CD8-positive, alpha-beta T cell (primary cell): ENCODE measurements at regions of chr1 and their contacts with region 1.

Region 1: DNA sequence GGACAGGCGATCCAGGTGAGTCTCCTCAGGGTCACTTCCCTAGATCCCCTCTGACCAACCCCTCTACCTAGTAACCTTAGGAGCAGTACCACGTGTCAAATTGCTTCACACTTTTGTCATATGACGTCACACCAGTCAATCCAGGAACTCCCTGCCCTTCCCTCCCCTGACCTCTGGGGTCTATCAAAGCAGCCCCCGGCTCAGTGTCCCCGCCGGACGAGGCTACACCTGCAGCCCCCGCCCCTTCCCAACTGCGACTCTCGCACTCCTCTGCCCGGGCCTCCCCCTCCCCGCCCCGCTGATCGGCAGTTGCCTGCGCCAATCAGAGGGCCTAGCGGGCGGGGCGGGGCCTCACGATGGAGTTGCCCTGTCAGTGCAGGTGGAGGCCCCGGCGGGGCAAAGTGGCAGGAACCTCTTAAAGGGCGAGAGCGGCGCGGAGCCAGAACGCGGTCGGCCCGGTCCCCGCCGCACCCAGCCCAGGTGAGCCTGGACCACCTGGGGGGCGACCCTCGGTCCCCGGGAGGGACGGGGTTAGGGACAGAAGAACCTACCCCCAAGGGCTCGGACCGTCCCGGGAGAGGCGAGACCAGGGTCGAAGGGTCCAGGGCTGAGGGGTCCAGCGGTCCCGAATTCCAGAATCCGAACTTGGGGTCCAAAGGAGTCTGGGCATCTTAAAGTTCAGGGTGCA is 27.5 kb upstream of the EPB41 start:
- DNase-seq: peak; percentile 80 to 94 (median 87)
- ATAC-seq: peak; percentile 71
- H3K4me3 ChIP-seq: peak overlapping the region; percentile 93 to 94
- H3K4me3 Mint-ChIP-seq: peak overlapping the region; percentile 87
- H3K27ac ChIP-seq: peak overlapping the region; percentile 67 to 88
- H3K27ac Mint-ChIP-seq: peak overlapping the region; percentile 96
- H3K4me1 ChIP-seq: peaks cover 41% of the 10 kb centered on the region
- H3K4me1 Mint-ChIP-seq: peaks cover 59% of the 10 kb centered on the region
- H3K27me3 ChIP-seq: no peaks in the 10 kb centered on the region
- H3K27me3 Mint-ChIP-seq: no peaks in the 10 kb centered on the region
- CTCF ChIP-seq: no peak

Region 2: DNA sequence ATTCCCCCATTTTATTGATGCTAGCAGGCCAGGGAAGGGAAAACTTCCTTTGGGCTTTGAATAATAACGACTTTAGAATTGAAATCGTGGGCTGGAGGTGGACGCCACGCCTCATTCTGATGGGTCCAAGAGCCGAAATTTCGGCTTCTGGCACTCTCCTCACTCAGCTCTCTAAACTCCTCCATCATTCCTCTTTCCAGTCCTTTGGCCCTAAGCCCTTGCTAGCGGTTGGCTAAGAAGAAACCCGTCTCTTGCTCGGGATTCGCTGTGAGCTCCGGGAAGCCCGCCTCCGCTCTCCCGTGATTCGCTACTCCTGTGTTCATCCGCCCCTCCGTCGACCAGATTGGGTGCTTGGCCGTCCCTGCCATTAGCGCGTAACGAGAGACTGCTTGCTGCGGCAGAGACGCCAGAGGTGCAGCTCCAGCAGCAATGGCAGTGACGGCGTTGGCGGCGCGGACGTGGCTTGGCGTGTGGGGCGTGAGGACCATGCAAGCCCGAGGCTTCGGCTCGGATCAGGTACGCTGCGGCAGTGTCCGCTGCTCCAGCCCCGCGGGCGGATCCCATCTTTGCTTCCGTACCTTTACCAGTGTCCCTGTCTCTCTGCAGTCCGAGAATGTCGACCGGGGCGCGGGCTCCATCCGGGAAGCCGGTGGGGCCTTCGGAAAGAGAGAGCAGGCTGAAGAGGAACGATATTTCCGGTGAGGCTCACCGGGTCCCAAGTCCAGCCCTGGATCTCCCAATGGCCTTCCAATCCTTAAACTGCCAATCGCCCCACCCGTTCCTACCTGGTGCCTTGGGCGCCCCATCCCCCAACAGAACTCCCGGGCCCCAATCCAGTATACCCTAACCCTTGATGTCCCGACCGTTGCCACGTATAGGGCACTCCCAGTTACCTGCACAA is 650.9 kb before region 1 on chr1 and contains the start of gene ATP5IF1:
- CTCF ChIA-PET with region 1: no interaction called
- POLR2A ChIA-PET with region 1: no interaction called
- intact Hi-C with region 1: loop called in 1 of 2 experiments (anchors 5 kb)
- DNase-seq: peak; percentile 90 to 98 (median 94)
- ATAC-seq: peak; percentile 95
- H3K4me3 ChIP-seq: peak within 1 kb of the TSS; percentile 80 to 96
- H3K4me3 Mint-ChIP-seq: no peak within 1 kb of the TSS
- H3K27ac ChIP-seq: peak within 1 kb of the TSS; percentile 84 to 96
- H3K27ac Mint-ChIP-seq: no peak within 1 kb of the TSS
- H3K4me1 ChIP-seq: peaks cover 41% of the 10 kb centered on the region
- H3K4me1 Mint-ChIP-seq: peaks cover 21% of the 10 kb centered on the region
- H3K27me3 ChIP-seq: no peaks in the 10 kb centered on the region
- H3K27me3 Mint-ChIP-seq: no peaks in the 10 kb centered on the region
- CTCF ChIP-seq: no peak
- total RNA-seq, gene ATP5IF1: 66.1 to 69.3 TPM

Region 3: GRCh38 chr1:28552758-28553663 is 333.9 kb before region 1 on chr1 and contains the start of gene TRNAU1AP:
- CTCF ChIA-PET with region 1: no interaction called
- POLR2A ChIA-PET with region 1: no interaction called
- intact Hi-C with region 1: loop called in 1 of 2 experiments (anchors 2 kb)
- DNase-seq: peak; percentile 95 to 98 (median 97)
- ATAC-seq: peak; percentile 96
- H3K4me3 ChIP-seq: peak within 1 kb of the TSS; percentile 91 to 98
- H3K4me3 Mint-ChIP-seq: peak within 1 kb of the TSS; percentile 99
- H3K27ac ChIP-seq: peak within 1 kb of the TSS; percentile 77 to 86
- H3K27ac Mint-ChIP-seq: peak within 1 kb of the TSS; percentile 99
- H3K4me1 ChIP-seq: peaks cover 15% of the 10 kb centered on the region
- H3K4me1 Mint-ChIP-seq: peaks cover 24% of the 10 kb centered on the region
- H3K27me3 ChIP-seq: no peaks in the 10 kb centered on the region
- H3K27me3 Mint-ChIP-seq: no peaks in the 10 kb centered on the region
- CTCF ChIP-seq: no peak
- total RNA-seq, gene TRNAU1AP: 20.5 to 25.7 TPM

Region 4: GRCh38 chr1:28914228-28915030 is 27.6 kb after region 1 on chr1 and contains the start of gene EPB41:
- CTCF ChIA-PET with region 1: interaction called, 8 read pairs
- POLR2A ChIA-PET with region 1: interaction called, 12 read pairs
- intact Hi-C with region 1: loop called (anchors 1 kb)
- DNase-seq: peak; percentile 76 to 96 (median 94)
- ATAC-seq: peak; percentile 77
- H3K4me3 ChIP-seq: peak within 1 kb of the TSS; percentile 80 to 86
- H3K4me3 Mint-ChIP-seq: peak within 1 kb of the TSS; percentile 99
- H3K27ac ChIP-seq: peak within 1 kb of the TSS; percentile 62 to 77
- H3K27ac Mint-ChIP-seq: peak within 1 kb of the TSS; percentile 98
- H3K4me1 ChIP-seq: peaks cover 40% of the 10 kb centered on the region
- H3K4me1 Mint-ChIP-seq: peaks cover 49% of the 10 kb centered on the region
- H3K27me3 ChIP-seq: no peaks in the 10 kb centered on the region
- H3K27me3 Mint-ChIP-seq: no peaks in the 10 kb centered on the region
- CTCF ChIP-seq: no peak
- total RNA-seq, gene EPB41: 109 to 117 TPM

Region 5: GRCh38 chr1:28983509-28984310 is 96.8 kb after region 1 on chr1:
- CTCF ChIA-PET with region 1: interaction called, 9 read pairs
- POLR2A ChIA-PET with region 1: interaction called, 3 read pairs
- intact Hi-C with region 1: loop called (anchors 1 to 2 kb)
- DNase-seq: peak in 5 of 9 experiments; percentile 11 to 42 (median 33)
- ATAC-seq: no peak
- H3K4me3 ChIP-seq: no peak overlapping the region
- H3K4me3 Mint-ChIP-seq: peak overlapping the region; percentile 8
- H3K27ac ChIP-seq: no peak overlapping the region
- H3K27ac Mint-ChIP-seq: peak overlapping the region; percentile 46
- H3K4me1 ChIP-seq: peaks cover 18% of the 10 kb centered on the region
- H3K4me1 Mint-ChIP-seq: peaks cover 79% of the 10 kb centered on the region
- H3K27me3 ChIP-seq: no peaks in the 10 kb centered on the region
- H3K27me3 Mint-ChIP-seq: no peaks in the 10 kb centered on the region
- CTCF ChIP-seq: peak; percentile 13

Region 6: DNA sequence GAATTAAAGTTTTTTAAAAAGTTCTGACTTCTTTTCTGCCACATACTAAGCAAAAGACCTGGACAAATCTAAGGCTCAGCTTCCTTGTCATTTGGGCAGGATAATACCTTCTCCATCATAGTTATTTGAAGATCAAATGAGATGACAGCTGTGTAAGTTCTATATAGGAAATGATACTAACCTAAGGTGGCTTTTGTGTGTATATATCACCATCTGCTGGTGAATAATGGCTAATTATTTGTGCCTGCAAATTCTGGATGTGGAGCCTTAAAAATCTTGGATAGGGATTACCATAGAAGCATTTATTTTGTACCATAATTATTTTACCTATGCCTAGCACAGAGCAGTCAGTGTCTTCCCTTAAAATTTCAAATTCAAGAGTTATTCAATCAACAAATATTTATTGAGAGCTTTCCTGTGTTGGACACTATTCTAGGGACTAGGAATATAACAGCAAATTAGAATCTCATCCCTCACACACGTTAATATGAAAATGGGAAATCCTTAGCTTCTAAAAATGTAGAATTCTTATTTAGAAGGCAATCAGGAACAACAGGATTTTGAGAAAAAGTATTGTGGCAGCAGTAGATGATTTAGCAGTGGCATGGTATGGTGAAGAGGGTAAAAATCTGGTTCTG is 147.1 kb after region 1 on chr1:
- CTCF ChIA-PET with region 1: interaction called, 238 read pairs
- POLR2A ChIA-PET with region 1: interaction called, 3 read pairs
- intact Hi-C with region 1: loop called (anchors 1 kb)
- DNase-seq: peak in 2 of 9 experiments; percentile 47 to 65
- ATAC-seq: peak; percentile 71
- H3K4me3 ChIP-seq: no peak overlapping the region
- H3K4me3 Mint-ChIP-seq: no peak overlapping the region
- H3K27ac ChIP-seq: no peak overlapping the region
- H3K27ac Mint-ChIP-seq: no peak overlapping the region
- H3K4me1 ChIP-seq: no peaks in the 10 kb centered on the region
- H3K4me1 Mint-ChIP-seq: peaks cover 2% of the 10 kb centered on the region
- H3K27me3 ChIP-seq: no peaks in the 10 kb centered on the region
- H3K27me3 Mint-ChIP-seq: no peaks in the 10 kb centered on the region
- CTCF ChIP-seq: peak; percentile 71

Region 7: GRCh38 chr1:29202584-29203340 is 315.9 kb after region 1 on chr1:
- CTCF ChIA-PET with region 1: interaction called, 202 read pairs
- POLR2A ChIA-PET with region 1: no interaction called
- intact Hi-C with region 1: loop called (anchors 1 kb)
- DNase-seq: peak; percentile 67 to 95 (median 87)
- ATAC-seq: peak; percentile 84
- H3K4me3 ChIP-seq: no peak overlapping the region
- H3K4me3 Mint-ChIP-seq: no peak overlapping the region
- H3K27ac ChIP-seq: no peak overlapping the region
- H3K27ac Mint-ChIP-seq: no peak overlapping the region
- H3K4me1 ChIP-seq: no peaks in the 10 kb centered on the region
- H3K4me1 Mint-ChIP-seq: no peaks in the 10 kb centered on the region
- H3K27me3 ChIP-seq: no peaks in the 10 kb centered on the region
- H3K27me3 Mint-ChIP-seq: no peaks in the 10 kb centered on the region
- CTCF ChIP-seq: peak; percentile 93